Naive thymus-derived CD4-positive, alpha-beta T cell (primary cell): ENCODE measurements at regions of chr15 and their contacts with region 1.

Region 1: GRCh38 chr15:58070801-58071418 is 5.4 kb upstream of the ALDH1A2 start:
- DNase-seq: peak in 5 of 9 donors; percentile 10 to 43 (median 22)
- ATAC-seq: no peak
- H3K4me3 ChIP-seq: no peak overlapping the region
- H3K4me3 Mint-ChIP-seq: no peak overlapping the region
- H3K27ac ChIP-seq: no peak overlapping the region
- H3K27ac Mint-ChIP-seq: no peak overlapping the region
- H3K4me1 ChIP-seq: no peaks in the 10 kb centered on the region
- H3K4me1 Mint-ChIP-seq: peaks cover 0 to 8% (median 6%) of the 10 kb centered on the region in 7 donors
- H3K27me3 ChIP-seq: peaks cover 0 to 14% of the 10 kb centered on the region in 2 donors
- H3K27me3 Mint-ChIP-seq: peaks cover 46 to 66% (median 62%) of the 10 kb centered on the region in 5 donors

Region 2: GRCh38 chr15:57751177-57751800 is 319.6 kb before region 1 on chr15:
- CTCF ChIA-PET with region 1: no interaction called
- POLR2A ChIA-PET with region 1: no interaction called
- intact Hi-C with region 1: loop called in 1 of 2 experiments (anchors 5 kb)
- DNase-seq: no peak
- ATAC-seq: no peak
- H3K4me3 ChIP-seq: no peak overlapping the region
- H3K4me3 Mint-ChIP-seq: no peak overlapping the region
- H3K27ac ChIP-seq: no peak overlapping the region
- H3K27ac Mint-ChIP-seq: no peak overlapping the region
- H3K4me1 ChIP-seq: no peaks in the 10 kb centered on the region
- H3K4me1 Mint-ChIP-seq: peaks cover 0 to 7% (median 0%) of the 10 kb centered on the region in 7 donors
- H3K27me3 ChIP-seq: no peaks in the 10 kb centered on the region
- H3K27me3 Mint-ChIP-seq: peaks cover 0 to 8% (median 0%) of the 10 kb centered on the region in 5 donors

Region 3: GRCh38 chr15:57866149-57866736 is 204.7 kb before region 1 on chr15:
- CTCF ChIA-PET with region 1: interaction called, 3 read pairs
- POLR2A ChIA-PET with region 1: no interaction called
- intact Hi-C with region 1: loop called (anchors 1 to 5 kb)
- DNase-seq: peak in 7 of 9 donors; percentile 13 to 50 (median 35)
- ATAC-seq: peak; percentile 45
- H3K4me3 ChIP-seq: no peak overlapping the region
- H3K4me3 Mint-ChIP-seq: no peak overlapping the region
- H3K27ac ChIP-seq: no peak overlapping the region
- H3K27ac Mint-ChIP-seq: no peak overlapping the region
- H3K4me1 ChIP-seq: no peaks in the 10 kb centered on the region
- H3K4me1 Mint-ChIP-seq: peaks cover 0 to 16% (median 7%) of the 10 kb centered on the region in 7 donors
- H3K27me3 ChIP-seq: no peaks in the 10 kb centered on the region
- H3K27me3 Mint-ChIP-seq: peaks cover 41 to 71% (median 46%) of the 10 kb centered on the region in 5 donors

Region 4: GRCh38 chr15:58043192-58043903 is 27.6 kb before region 1 on chr15:
- CTCF ChIA-PET with region 1: no interaction called
- POLR2A ChIA-PET with region 1: no interaction called
- intact Hi-C with region 1: loop called in 1 of 2 experiments (anchors 2 kb)
- DNase-seq: peak in 4 of 9 donors; percentile 10 to 36 (median 20)
- ATAC-seq: peak; percentile 63
- H3K4me3 ChIP-seq: no peak overlapping the region
- H3K4me3 Mint-ChIP-seq: no peak overlapping the region
- H3K27ac ChIP-seq: no peak overlapping the region
- H3K27ac Mint-ChIP-seq: no peak overlapping the region
- H3K4me1 ChIP-seq: no peaks in the 10 kb centered on the region
- H3K4me1 Mint-ChIP-seq: peaks cover 0 to 1% (median 0%) of the 10 kb centered on the region in 7 donors
- H3K27me3 ChIP-seq: no peaks in the 10 kb centered on the region
- H3K27me3 Mint-ChIP-seq: peaks cover 27 to 63% (median 45%) of the 10 kb centered on the region in 5 donors

Region 5: DNA sequence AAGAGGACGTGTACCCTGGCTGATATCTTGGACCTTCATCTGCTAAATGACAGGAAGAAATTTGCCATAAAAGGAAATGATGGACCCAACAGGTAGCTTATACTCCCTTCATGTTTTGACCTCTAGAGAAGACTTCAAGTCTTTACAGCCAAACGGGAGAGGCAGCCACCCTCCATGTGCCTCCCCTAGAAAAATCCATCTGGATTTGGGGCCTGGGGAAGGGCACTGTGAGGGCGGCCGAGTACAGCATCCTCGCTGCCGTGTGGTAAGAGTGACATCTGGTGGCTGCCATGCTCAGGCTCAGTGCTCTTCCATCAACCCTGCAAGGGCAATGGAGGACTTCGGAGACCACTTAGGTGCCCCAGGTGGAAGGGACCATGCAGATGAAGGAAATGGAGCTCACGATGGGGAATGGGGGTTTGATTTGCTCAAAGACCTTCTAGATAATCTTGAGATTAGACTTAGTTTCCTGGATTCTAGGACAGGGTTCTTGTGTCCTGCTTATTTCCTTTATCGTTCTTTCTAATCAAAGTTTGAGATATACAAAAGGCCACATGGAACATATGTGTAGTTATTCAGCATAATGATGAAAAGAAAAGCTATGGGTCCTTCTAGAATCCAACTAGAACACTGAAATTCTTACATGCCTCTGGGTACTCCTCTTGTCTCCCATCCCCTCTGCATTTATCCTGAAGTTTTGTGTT is 111.7 kb after region 1 on chr15:
- CTCF ChIA-PET with region 1: no interaction called
- POLR2A ChIA-PET with region 1: no interaction called
- intact Hi-C with region 1: loop called in 1 of 2 experiments (anchors 10 kb)
- DNase-seq: peak in 3 of 9 donors; percentile 4 to 39 (median 9)
- ATAC-seq: peak; percentile 66
- H3K4me3 ChIP-seq: no peak overlapping the region
- H3K4me3 Mint-ChIP-seq: no peak overlapping the region
- H3K27ac ChIP-seq: no peak overlapping the region
- H3K27ac Mint-ChIP-seq: no peak overlapping the region
- H3K4me1 ChIP-seq: peaks cover 0 to 4% of the 10 kb centered on the region in 2 donors
- H3K4me1 Mint-ChIP-seq: peaks cover 0 to 12% (median 10%) of the 10 kb centered on the region in 7 donors
- H3K27me3 ChIP-seq: no peaks in the 10 kb centered on the region
- H3K27me3 Mint-ChIP-seq: peaks cover 10 to 37% (median 24%) of the 10 kb centered on the region in 5 donors